Dorsolateral prefrontal cortex (tissue), 120 donors: ENCODE measurements at regions of chr18 and their contacts with region 1.

Region 1: DNA sequence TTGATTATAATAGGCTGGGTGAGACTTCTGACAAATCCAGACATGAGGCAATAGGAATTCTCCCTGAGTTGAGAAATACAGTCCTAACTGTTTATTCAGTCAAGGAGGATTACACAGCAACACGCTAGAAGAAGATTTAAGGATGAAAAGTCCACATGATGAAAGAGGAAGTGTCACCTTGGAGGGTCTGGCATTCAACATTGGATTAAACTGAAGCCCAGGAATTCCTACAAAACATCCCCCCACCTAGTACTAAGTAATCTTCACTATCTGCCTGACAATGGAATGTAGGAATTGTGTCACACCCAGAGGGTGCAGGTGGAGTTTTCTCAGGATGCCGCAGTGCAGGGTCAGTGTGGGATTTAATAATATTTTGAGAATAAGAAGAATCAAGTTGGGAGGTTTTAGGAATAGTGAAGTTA is 142.4 kb downstream of the SOCS6 start:
- DNase-seq: no peak
- H3K4me3 ChIP-seq: no peak overlapping the region
- H3K27ac ChIP-seq: no peak overlapping the region
- H3K27me3 ChIP-seq: no peaks in the 10 kb centered on the region
- CTCF ChIP-seq: no peak

Region 2: DNA sequence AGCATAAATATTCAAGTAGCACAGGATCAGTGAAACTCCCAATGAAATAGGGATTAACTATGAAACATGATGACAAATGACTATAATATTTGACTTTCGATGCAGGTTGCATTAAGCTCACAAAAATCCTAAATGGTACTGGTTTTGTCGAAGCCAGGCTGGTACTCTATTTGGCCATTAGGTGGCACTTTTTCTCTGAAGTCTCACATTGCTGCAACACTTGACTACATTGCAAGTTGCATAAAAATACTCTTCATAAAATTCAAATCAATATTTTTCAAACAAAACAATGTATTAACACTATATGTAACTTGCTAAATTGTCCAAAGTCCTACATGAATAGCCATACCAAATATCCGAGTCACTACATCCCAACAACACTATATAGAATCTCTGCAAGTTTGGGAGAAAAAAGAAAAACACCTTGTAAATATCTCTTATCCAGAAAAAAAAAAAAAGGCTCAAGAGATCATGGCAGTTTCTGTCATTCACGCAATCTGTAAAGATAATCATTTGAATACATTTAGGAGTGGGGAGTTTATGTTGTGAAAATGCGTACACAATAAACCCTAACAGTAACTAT is 235.3 kb before region 1 on chr18:
- intact Hi-C with region 1: loop called in 1 of 2 experiments (anchors 2 kb)
- DNase-seq: peak in 2 of 10 donors; percentile 28 to 49
- H3K4me3 ChIP-seq: no peak overlapping the region
- H3K27ac ChIP-seq: peak overlapping the region in 7 of 59 donors; percentile 2 to 35 (median 22)
- H3K27me3 ChIP-seq: no peaks in the 10 kb centered on the region
- CTCF ChIP-seq: peak; percentile 68 to 95 (median 86)

Region 3: GRCh38 chr18:70205421-70206397 is 225.5 kb before region 1 on chr18 and contains the start of gene RTTN:
- intact Hi-C with region 1: loop called (anchors 2 to 5 kb)
- DNase-seq: peak; percentile 88 to 96 (median 94)
- H3K4me3 ChIP-seq: peak within 1 kb of the TSS; percentile 55 to 98 (median 84)
- H3K27ac ChIP-seq: peak within 1 kb of the TSS; percentile 84 to 100 (median 99)
- H3K27me3 ChIP-seq: no peaks in the 10 kb centered on the region
- CTCF ChIP-seq: peak in 38 of 56 donors; percentile 8 to 56 (median 28)
- total RNA-seq, gene RTTN: 15.2 to 42.3 (median 25.8) TPM

Region 4: GRCh38 chr18:70288851-70289328 is 142.3 kb before region 1 on chr18 and contains the start of gene SOCS6:
- intact Hi-C with region 1: loop called (anchors 5 to 10 kb)
- DNase-seq: peak in 7 of 10 donors; percentile 21 to 73 (median 58)
- H3K4me3 ChIP-seq: peak within 1 kb of the TSS; percentile 45 to 86 (median 75)
- H3K27ac ChIP-seq: peak within 1 kb of the TSS; percentile 47 to 94 (median 83)
- H3K27me3 ChIP-seq: no peaks in the 10 kb centered on the region
- CTCF ChIP-seq: no peak
- total RNA-seq, gene SOCS6: 11.8 to 30.4 (median 19.8) TPM

Region 5: DNA sequence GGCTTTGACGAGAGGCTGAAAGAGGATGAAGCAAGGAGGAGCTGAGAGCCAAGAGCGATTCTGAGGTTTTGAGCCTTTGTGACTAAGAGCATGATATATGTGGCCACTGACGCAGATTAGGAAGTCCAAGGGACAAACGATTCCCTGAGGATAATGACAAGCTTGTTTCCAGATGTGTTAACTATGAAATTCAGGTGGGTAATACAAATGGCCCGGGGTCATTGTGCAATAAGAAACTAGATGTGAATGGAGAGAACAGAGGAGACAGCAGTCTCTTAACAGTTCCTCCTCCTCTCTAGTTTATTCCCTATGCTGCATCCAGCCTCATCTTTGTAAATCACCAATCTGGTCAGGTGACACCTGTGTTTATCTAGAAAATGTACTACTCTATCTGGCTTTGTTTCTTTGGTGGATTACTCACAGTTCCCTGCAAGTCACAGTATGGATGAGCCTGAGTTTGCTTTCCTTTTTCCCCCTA is 58.1 kb before region 1 on chr18:
- intact Hi-C with region 1: loop called in 1 of 2 experiments (anchors 2 kb)
- DNase-seq: no peak
- H3K4me3 ChIP-seq: no peak overlapping the region
- H3K27ac ChIP-seq: peak overlapping the region in 6 of 59 donors; percentile 2 to 20 (median 9)
- H3K27me3 ChIP-seq: no peaks in the 10 kb centered on the region
- CTCF ChIP-seq: no peak

Region 6: DNA sequence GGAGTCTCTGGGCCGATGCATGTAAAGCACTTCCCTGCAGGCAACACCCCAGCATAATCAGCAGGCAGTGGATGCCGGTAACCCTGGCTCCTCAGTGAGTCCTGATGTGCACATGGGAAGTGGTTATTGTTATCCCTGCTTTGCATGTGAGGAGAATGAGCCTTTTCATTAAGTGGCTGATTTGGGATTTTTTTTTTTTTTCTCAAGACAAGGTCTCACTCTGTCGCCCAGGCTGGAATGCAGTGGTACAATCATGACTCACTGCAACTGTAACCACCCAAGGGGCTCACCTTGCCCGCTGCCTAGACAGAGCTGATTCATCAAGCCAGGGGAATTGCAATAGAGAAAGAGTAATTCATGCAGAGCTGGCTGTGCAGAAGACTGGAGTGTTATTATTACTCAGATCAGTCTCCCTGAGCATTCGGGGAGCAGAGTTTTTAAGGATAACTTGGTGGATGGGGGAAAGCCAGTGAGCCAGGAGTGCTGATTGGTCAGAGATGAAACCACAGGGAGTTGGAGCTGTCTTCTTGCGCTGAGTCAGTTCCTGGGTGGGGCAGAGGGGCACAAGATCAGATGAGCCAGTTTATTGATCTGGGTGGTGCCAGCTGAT is 46.9 kb before region 1 on chr18:
- intact Hi-C with region 1: loop called in 1 of 2 experiments (anchors 5 kb)
- DNase-seq: no peak
- H3K4me3 ChIP-seq: no peak overlapping the region
- H3K27ac ChIP-seq: peak overlapping the region in 53 of 59 donors; percentile 34 to 99 (median 94)
- H3K27me3 ChIP-seq: no peaks in the 10 kb centered on the region
- CTCF ChIP-seq: no peak